Upper lobe of right lung (tissue), 1 donor: ENCODE measurements at regions of chr16 and their contacts with region 1.

Region 1: DNA sequence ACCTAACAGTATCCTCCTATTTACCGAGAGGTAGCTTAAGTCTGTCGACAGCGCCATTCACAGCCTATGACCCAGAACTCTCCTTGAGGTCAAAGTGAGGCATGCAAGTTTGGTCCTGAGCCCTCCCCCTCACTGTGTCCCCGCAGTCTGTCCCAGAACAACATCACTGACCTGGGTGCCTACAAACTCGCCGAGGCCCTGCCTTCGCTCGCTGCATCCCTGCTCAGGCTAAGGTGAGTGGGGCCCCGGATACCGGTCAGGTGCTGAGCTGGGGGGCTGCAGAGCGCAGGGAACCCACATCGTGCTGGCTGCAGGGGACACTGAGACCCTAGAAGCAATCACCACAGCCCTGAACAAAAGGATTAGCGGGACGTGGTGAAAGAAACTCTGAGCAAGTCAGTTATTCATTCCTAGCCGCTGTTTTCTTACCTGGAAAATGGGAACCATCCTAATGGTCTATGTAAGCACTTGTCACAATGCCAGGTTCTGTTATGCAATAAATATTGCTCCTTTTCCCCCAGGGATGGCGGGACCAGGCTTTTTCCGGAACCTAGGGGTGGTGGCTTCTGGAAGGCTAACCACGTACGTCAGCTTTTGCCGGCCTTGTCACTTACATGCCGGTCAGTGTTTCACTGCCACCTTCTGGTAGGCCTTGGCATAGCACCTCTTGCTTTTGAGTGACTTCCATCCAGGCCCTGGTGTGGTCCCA is 23.8 kb downstream of the DEXI start:
- DNase-seq: peak; percentile 90
- ATAC-seq: peak; percentile 94
- H3K4me3 ChIP-seq: no peak overlapping the region
- H3K27ac ChIP-seq: peak overlapping the region; percentile 58
- H3K4me1 ChIP-seq: peaks cover 27% of the 10 kb centered on the region
- H3K27me3 ChIP-seq: no peaks in the 10 kb centered on the region
- CTCF ChIP-seq: peak; percentile 94

Region 2: DNA sequence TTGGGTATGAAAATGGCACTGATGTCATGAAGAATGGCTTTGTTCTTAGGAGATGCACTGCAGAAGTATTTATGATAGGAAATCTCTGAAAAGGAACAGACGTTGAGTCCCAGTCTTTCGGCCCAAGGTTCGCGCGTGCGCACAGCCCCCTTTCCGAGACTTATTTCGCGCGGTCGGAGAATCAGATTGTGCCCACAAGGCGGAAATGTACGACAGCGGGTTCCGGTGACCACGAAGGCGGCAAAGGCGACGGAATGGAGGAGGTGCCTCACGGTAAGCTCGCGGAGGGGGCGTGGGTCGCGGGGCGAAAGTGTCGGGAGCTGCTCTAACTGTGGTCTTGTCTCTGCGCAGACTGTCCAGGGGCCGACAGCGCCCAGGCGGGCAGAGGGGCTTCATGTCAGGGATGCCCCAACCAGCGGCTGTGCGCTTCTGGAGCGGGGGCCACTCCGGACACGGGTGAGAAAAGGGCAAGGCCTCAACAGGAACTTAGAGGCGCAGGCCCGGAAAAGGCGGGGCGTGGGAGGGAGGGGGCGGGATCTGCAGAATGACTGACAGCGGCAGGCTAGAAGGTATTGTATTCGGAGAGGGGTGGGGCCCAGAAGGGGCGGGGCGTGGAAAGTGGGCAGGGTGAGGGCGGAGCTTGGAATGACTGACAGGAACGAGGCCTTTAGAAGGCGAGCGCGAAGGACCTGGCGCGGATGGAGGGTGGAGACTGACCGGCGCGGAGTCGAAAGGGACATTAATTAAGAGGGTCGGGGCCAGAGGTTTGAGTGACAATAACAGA is 174.6 kb before region 1 on chr16 and contains the start of gene NUBP1:
- intact Hi-C with region 1: loop called (anchors 10 kb)
- DNase-seq: peak; percentile 100
- ATAC-seq: peak; percentile 99
- H3K4me3 ChIP-seq: peak within 1 kb of the TSS; percentile 60
- H3K27ac ChIP-seq: peak within 1 kb of the TSS; percentile 97
- H3K4me1 ChIP-seq: peaks cover 26% of the 10 kb centered on the region
- H3K27me3 ChIP-seq: no peaks in the 10 kb centered on the region
- CTCF ChIP-seq: no peak
- total RNA-seq, gene NUBP1: 33.7 TPM

Region 3: DNA sequence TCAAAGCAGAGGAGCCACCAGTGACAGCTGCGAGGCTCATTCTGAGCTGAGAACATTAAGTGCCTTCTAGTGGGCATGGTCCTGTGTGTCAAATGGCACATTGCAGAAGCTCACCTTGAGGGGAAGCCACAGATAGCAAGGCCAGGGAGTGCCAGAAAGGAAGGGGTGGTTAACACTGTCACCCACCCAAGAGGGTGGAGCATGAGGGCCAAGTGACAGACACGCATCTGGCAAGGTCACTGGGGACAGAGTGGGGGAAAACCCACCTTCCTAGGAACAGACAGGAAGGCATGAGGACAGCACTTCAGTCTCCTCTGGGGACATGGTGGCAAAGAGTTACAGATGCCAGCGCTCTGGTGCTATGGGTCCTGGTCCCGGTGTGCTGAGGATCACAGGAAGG is 152.7 kb before region 1 on chr16:
- intact Hi-C with region 1: loop called (anchors 10 kb)
- DNase-seq: no peak
- ATAC-seq: no peak
- H3K4me3 ChIP-seq: no peak overlapping the region
- H3K27ac ChIP-seq: no peak overlapping the region
- H3K4me1 ChIP-seq: no peaks in the 10 kb centered on the region
- H3K27me3 ChIP-seq: no peaks in the 10 kb centered on the region
- CTCF ChIP-seq: no peak

Region 4: DNA sequence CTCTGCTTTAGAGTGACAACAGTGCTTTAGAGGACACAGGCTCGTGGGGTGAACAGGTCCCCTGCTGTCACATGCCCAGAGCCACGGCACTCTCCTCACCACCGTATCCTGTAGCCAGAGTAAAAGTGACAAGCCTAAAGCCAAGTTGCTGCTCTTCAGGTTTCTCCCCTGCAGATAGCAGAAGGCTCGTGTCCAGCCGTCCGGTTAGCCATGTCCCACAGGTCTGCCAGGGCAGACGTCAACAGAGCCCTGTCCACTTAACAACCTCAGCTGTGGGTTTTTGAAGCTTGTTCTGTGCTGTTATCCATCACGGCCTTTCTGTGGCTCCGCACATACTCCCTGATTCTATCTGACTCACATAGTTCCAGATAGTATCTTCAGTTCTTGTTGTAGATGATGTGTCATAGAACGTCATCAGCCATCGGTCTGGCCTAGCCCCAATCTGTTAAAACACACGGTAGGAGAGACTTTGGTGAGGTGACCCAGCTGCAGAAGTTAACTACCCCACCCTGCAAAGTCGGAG is 236.9 kb after region 1 on chr16:
- intact Hi-C with region 1: no loop called
- DNase-seq: no peak
- ATAC-seq: peak; percentile 6
- H3K4me3 ChIP-seq: no peak overlapping the region
- H3K27ac ChIP-seq: no peak overlapping the region
- H3K4me1 ChIP-seq: no peaks in the 10 kb centered on the region
- H3K27me3 ChIP-seq: no peaks in the 10 kb centered on the region
- CTCF ChIP-seq: no peak